Activated CD4-positive, alpha-beta T cell treated with anti-CD3 and anti-CD28 coated beads, Interleukin-2, amount 10 ng/mL, durations not matched to agents 24 days and 14 days (primary cell): ENCODE measurements at regions of chr6 and their contacts with region 1.

Region 1: DNA sequence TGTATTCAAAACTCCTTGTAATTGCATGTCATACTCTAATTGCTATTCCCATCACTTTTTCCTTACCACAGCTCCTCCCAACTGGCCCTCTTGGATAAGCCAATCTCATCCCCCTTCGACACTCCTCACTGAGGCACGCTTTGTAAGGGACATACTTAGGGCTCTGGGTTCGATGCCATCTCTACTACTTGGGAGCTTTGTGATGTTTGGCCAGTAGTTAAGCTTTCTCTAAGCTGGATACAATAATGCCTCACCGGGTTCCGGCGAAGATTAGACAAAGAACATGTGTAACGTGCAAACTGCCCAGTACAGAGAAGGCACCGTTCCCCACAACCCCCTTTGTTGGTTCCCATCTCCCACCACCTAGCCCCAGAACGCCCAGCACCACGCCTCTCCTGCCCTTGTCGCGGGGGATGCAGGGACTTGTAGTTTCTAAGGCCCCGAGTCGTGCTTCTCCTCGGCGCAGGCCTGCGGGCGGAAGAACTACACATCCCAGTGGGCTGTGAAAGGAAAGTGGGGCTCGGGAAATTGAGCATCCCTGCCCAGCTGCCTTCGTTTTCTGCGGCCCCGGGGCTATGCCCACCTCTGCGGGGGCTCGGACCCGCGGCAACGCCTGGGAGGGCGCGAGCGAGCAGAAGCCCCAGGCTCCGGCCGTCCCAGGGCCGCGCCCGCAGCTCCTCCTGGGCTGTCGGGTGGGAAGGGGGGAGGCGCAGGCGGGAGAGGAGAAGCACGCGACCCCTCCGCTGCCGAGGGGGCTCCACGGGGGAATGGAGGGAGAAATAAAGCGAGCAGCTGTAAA is 1.1 kb upstream of the ZDHHC14 start:
- DNase-seq: peak; percentile 96
- H3K4me3 Mint-ChIP-seq: peak overlapping the region; percentile 82
- H3K27ac Mint-ChIP-seq: peak overlapping the region; percentile 85
- H3K4me1 Mint-ChIP-seq: peaks cover 31% of the 10 kb centered on the region
- H3K27me3 Mint-ChIP-seq: peaks cover 14% of the 10 kb centered on the region

Region 2: DNA sequence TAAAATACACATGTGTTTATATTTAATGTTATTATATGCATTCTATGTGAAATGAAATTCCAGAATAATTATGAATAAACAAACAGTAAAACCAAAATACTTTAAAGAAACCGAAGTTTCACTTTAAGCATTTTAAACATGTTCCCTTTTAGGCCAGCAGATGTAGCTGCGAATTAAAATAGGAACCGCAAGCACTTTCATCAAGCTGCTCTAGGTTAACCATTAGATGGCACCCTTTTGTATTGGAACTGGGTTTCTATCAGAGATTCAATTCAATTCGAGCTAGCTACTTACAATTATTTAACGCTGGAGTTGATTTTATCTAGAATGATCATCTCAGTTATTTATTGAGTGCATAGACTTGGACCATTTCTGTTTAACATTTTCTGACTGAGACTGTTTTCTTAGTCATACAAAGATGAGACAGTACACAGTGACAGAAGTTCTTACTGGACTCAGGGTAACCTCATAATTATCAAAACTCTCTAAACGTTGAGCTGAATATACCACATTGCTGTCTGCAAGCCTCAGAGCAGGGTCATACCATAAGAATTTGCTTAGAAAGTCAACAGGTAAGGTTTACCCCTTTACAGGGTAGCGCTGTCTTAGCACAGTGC is 65.0 kb before region 1 on chr6:
- intact Hi-C with region 1: loop called (anchors 2 kb)
- DNase-seq: peak; percentile 82
- H3K4me3 Mint-ChIP-seq: no peak overlapping the region
- H3K27ac Mint-ChIP-seq: no peak overlapping the region
- H3K4me1 Mint-ChIP-seq: peaks cover 11% of the 10 kb centered on the region
- H3K27me3 Mint-ChIP-seq: no peaks in the 10 kb centered on the region

Region 3: GRCh38 chr6:157323255-157323965 is 56.4 kb before region 1 on chr6 and contains the start of gene TMEM242:
- intact Hi-C with region 1: loop called (anchors 1 kb)
- DNase-seq: peak; percentile 97
- H3K4me3 Mint-ChIP-seq: peak within 1 kb of the TSS; percentile 94
- H3K27ac Mint-ChIP-seq: peak within 1 kb of the TSS; percentile 92
- H3K4me1 Mint-ChIP-seq: peaks cover 39% of the 10 kb centered on the region
- H3K27me3 Mint-ChIP-seq: peaks cover 21% of the 10 kb centered on the region
- total RNA-seq, gene TMEM242: 10.1 and 10.7 TPM in 2 replicates

Region 4: DNA sequence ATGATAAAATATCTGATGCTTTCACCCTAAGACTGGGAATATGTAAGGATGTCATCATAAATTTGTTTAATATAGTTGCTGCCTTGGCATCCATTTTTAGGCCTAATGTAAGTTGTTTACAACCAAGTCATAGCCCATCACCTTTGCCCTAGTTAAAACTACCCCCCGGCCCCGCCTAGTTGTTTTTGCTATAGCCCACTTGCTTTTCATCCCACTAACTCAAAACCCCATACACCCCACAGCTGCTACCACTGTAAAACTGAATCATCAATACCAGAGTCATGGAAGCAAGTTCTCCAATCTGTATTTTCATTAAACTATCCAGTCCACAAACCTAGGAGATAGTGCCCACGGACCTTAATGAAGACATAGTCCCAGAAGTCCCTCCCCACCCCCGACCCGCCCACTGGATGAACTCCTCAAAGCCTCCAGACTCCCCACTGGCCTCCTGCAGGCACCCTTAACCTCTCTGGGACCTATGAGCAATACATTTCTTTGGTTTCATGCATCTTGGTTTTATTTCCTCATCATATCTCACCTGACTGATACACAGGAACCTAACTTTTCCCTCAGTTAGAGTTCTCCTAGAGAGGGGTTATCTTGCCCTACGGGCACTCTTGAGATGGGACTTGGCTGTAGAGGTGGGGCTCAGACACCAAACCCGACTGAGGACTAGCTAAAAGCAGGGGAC is 11.4 kb before region 1 on chr6:
- intact Hi-C with region 1: loop called (anchors 1 kb)
- DNase-seq: no peak
- H3K4me3 Mint-ChIP-seq: no peak overlapping the region
- H3K27ac Mint-ChIP-seq: no peak overlapping the region
- H3K4me1 Mint-ChIP-seq: peaks cover 16% of the 10 kb centered on the region
- H3K27me3 Mint-ChIP-seq: peaks cover 59% of the 10 kb centered on the region

Region 5: GRCh38 chr6:157392927-157393668 is 13.2 kb after region 1 on chr6:
- intact Hi-C with region 1: no loop called
- DNase-seq: no peak
- H3K4me3 Mint-ChIP-seq: no peak overlapping the region
- H3K27ac Mint-ChIP-seq: no peak overlapping the region
- H3K4me1 Mint-ChIP-seq: peaks cover 9% of the 10 kb centered on the region
- H3K27me3 Mint-ChIP-seq: no peaks in the 10 kb centered on the region

Region 6: GRCh38 chr6:157443066-157443800 is 63.4 kb after region 1 on chr6:
- intact Hi-C with region 1: loop called (anchors 5 kb)
- DNase-seq: peak; percentile 67
- H3K4me3 Mint-ChIP-seq: no peak overlapping the region
- H3K27ac Mint-ChIP-seq: peak overlapping the region; percentile 74
- H3K4me1 Mint-ChIP-seq: peaks cover 19% of the 10 kb centered on the region
- H3K27me3 Mint-ChIP-seq: no peaks in the 10 kb centered on the region

Region 7: GRCh38 chr6:157535339-157536222 is 155.7 kb after region 1 on chr6:
- intact Hi-C with region 1: loop called (anchors 2 kb)
- DNase-seq: peak; percentile 76
- H3K4me3 Mint-ChIP-seq: peak overlapping the region; percentile 67
- H3K27ac Mint-ChIP-seq: peak overlapping the region; percentile 80
- H3K4me1 Mint-ChIP-seq: peaks cover 49% of the 10 kb centered on the region
- H3K27me3 Mint-ChIP-seq: peaks cover 8% of the 10 kb centered on the region

Region 8: DNA sequence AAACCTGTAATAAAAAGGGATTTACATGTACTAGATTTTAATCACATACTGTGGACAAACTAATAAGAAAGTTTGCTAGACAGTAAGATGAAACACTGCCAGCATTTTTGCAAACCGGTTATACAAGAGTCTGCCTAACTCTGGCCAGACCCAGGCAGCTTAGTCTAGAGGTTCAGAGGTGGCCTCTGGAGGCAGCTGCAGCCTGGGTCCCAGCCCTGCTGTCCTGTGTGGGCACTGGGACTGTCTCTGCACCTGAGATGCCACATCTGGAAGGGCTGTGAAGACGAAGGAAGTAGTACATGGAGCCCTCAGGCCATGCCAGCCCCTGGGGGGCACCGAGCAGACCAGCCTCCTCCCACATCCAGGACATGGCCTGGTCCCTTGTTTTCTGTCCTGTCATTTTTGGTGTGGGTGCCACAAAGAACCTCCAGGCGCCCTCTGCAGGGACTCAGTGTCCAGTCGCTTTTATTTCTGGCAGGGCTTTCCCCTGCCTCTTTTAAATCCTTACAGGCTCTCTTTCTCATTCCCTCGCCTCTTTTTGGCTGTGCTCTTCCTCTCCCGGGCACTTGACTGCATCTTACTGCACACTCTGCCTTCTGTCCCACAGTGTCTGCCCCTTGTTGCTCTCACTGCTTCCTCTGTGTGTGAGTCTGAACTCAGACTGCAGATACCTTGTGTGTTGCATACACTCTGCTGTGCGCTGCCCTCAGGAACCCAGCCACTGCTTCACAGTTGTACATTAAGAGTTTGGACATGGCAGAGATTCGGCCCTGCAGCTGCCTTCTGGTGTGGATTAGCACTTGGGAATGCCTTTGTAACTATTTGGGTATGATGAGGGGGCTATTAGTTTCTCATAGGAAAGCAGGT is 217.8 kb after region 1 on chr6:
- intact Hi-C with region 1: loop called (anchors 5 kb)
- DNase-seq: peak; percentile 80
- H3K4me3 Mint-ChIP-seq: no peak overlapping the region
- H3K27ac Mint-ChIP-seq: no peak overlapping the region
- H3K4me1 Mint-ChIP-seq: peaks cover 4% of the 10 kb centered on the region
- H3K27me3 Mint-ChIP-seq: no peaks in the 10 kb centered on the region